Esophagus muscularis mucosa (tissue), 4 donors: ENCODE measurements at regions of chr4 and their contacts with region 1.

Region 1: GRCh38 chr4:150140774-150141400 is 62.6 kb downstream of the DCLK2 start:
- DNase-seq: no peak
- H3K4me3 ChIP-seq: peak overlapping the region in 1 of 4 donors; percentile 15
- H3K27ac ChIP-seq: peak overlapping the region; percentile 42 to 67 (median 52)
- H3K4me1 ChIP-seq: peaks cover 6 to 31% (median 20%) of the 10 kb centered on the region in 4 donors
- H3K27me3 ChIP-seq: no peaks in the 10 kb centered on the region
- CTCF ChIP-seq: no peak
- EP300 ChIP-seq: no peak
- POLR2A ChIP-seq: no peak

Region 2: DNA sequence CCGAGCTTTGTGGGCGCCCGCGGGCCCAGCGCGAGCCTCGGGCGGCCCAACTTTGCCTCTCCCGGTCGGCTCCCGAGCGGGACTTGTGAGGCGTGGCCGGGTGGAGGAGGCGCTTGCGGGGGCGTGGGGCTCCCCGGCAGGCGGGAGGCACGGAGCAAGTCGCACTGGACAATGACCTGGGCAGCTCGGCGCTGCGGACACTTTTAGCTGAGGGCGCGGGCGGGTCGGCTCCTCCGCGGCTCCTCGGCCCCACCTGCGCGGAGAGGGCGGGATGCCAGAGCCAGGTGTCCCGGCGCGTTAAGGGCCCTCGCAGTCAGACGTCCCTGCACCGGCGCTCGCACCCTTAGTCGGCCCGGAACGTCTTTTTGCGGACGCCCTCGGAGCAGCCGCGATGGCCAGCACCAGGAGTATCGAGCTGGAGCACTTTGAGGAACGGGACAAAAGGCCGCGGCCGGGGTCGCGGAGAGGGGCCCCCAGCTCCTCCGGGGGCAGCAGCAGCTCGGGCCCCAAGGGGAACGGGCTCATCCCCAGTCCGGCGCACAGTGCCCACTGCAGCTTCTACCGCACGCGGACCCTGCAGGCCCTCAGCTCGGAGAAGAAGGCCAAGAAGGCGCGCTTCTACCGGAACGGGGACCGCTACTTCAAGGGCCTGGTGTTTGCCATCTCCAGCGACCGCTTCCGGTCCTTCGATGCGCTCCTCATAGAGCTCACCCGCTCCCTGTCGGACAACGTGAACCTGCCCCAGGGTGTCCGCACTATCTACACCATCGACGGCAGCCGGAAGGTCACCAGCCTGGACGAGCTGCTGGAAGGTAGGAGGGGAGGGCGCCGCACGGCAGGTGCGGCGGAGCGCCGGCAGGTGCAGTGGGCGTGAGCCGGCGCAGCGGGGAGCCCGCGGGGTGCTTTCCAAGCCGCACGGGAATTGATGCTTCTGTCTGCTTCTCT is 62.0 kb before region 1 on chr4:
- intact Hi-C with region 1: loop called (anchors 5 kb)
- DNase-seq: peak; percentile 93
- H3K4me3 ChIP-seq: peak overlapping the region; percentile 66 to 79 (median 76)
- H3K27ac ChIP-seq: peak overlapping the region; percentile 90 to 93 (median 92)
- H3K4me1 ChIP-seq: peaks cover 23 to 54% (median 41%) of the 10 kb centered on the region in 4 donors
- H3K27me3 ChIP-seq: no peaks in the 10 kb centered on the region
- CTCF ChIP-seq: peak in 1 of 3 experiments; percentile 25
- EP300 ChIP-seq: no peak
- POLR2A ChIP-seq: no peak

Region 3: GRCh38 chr4:150164956-150165629 is 24.2 kb after region 1 on chr4:
- intact Hi-C with region 1: no loop called
- DNase-seq: no peak
- H3K4me3 ChIP-seq: no peak overlapping the region
- H3K27ac ChIP-seq: no peak overlapping the region
- H3K4me1 ChIP-seq: peaks cover 4 to 17% (median 11%) of the 10 kb centered on the region in 4 donors
- H3K27me3 ChIP-seq: no peaks in the 10 kb centered on the region
- CTCF ChIP-seq: no peak
- EP300 ChIP-seq: no peak
- POLR2A ChIP-seq: no peak

Region 4: DNA sequence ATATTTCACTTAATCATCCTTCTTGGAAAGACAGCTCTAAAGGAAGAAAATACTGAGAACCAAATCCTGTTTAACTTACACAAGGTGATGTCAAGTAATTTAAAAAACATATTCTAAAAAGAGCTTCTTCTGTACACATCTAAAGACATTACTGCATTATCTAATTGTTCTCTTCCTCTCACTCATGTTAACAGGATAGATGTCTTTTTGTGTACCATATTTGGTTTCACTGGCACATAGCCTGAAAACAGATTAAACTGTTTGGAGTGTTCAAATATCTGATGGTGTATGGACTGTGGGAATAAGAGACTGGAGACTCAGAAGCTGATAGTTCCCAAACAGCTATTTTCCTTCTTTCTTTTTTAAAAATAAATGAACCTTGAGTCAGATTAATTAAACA is 227.8 kb after region 1 on chr4:
- intact Hi-C with region 1: no loop called
- DNase-seq: no peak
- H3K4me3 ChIP-seq: no peak overlapping the region
- H3K27ac ChIP-seq: no peak overlapping the region
- H3K4me1 ChIP-seq: peaks cover 0 to 16% (median 8%) of the 10 kb centered on the region in 4 donors
- H3K27me3 ChIP-seq: no peaks in the 10 kb centered on the region
- CTCF ChIP-seq: no peak
- EP300 ChIP-seq: no peak
- POLR2A ChIP-seq: no peak